ENCODE measurements at regions of chr20 and their contacts with region 1.

Region 1: DNA sequence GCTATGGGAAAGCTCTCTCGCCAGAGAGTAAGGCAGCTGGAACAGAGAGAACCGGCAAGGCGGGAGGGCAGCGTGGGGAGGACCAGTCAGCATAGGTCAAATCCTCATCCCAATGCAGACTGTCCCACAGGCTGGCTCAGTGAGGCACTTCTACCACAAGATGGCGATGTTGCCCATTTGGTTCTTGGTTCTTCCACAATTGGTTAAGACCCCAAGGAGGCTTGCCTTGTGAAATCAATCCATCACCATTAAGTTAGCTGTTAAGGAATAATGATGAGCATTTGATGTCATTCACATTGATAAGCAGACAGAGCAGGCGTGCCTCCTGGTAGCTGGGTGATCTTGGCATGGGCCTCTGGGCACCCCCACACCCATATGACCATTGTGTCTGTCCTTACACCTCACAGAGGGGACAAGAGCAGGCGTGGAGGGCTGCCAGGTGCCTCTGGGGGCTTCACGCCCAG is 2.4 kb downstream of the CSTL1 start:
- DNase-seq: peak; percentile 88
- H3K4me3 Mint-ChIP-seq: no peak overlapping the region
- H3K27ac Mint-ChIP-seq: no peak overlapping the region
- H3K4me1 Mint-ChIP-seq: no peaks in the 10 kb centered on the region
- H3K27me3 Mint-ChIP-seq: peaks cover 7% of the 10 kb centered on the region

Region 2: GRCh38 chr20:22675341-22675740 is 766.5 kb before region 1 on chr20:
- intact Hi-C with region 1: no loop called
- DNase-seq: no peak
- H3K4me3 Mint-ChIP-seq: no peak overlapping the region
- H3K27ac Mint-ChIP-seq: no peak overlapping the region
- H3K4me1 Mint-ChIP-seq: no peaks in the 10 kb centered on the region
- H3K27me3 Mint-ChIP-seq: no peaks in the 10 kb centered on the region

Region 3: DNA sequence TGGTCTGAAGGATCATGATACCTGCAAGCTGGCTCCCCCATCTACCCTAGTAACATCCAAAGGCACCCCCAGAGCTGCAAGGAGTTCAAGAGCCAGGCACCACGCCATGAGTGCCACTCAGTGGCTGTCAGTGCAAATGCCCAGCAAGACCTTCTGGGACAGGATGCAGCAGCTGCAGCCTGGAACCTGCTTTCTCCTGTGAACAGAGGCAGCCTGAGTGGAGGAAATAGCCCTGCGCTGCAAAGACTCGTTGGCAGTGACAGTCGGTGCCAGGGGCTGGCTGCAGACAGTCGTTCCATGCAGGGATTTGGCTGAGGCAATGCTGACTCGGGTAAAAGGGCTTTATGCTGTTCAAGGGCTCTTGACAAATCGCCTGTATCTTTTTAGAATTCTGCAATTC is 422.5 kb before region 1 on chr20:
- intact Hi-C with region 1: no loop called
- DNase-seq: no peak
- H3K4me3 Mint-ChIP-seq: no peak overlapping the region
- H3K27ac Mint-ChIP-seq: no peak overlapping the region
- H3K4me1 Mint-ChIP-seq: no peaks in the 10 kb centered on the region
- H3K27me3 Mint-ChIP-seq: peaks cover 5% of the 10 kb centered on the region

Region 4: GRCh38 chr20:23595817-23596340 is 154.0 kb after region 1 on chr20:
- intact Hi-C with region 1: no loop called
- DNase-seq: no peak
- H3K4me3 Mint-ChIP-seq: no peak overlapping the region
- H3K27ac Mint-ChIP-seq: no peak overlapping the region
- H3K4me1 Mint-ChIP-seq: no peaks in the 10 kb centered on the region
- H3K27me3 Mint-ChIP-seq: peaks cover 3% of the 10 kb centered on the region

Region 5: GRCh38 chr20:23606652-23607049 is 164.8 kb after region 1 on chr20:
- intact Hi-C with region 1: loop called (anchors 1 kb)
- DNase-seq: peak; percentile 91
- H3K4me3 Mint-ChIP-seq: no peak overlapping the region
- H3K27ac Mint-ChIP-seq: no peak overlapping the region
- H3K4me1 Mint-ChIP-seq: peaks cover 3% of the 10 kb centered on the region
- H3K27me3 Mint-ChIP-seq: no peaks in the 10 kb centered on the region

Measured in activated CD4-positive, alpha-beta T cell treated with anti-CD3 and anti-CD28 coated beads, Interleukin-2, amount 10 ng/mL, durations not matched to agents 24 days and 14 days (primary cell).